ENCODE measurements at regions of chr3 and their contacts with region 1.

Region 1: DNA sequence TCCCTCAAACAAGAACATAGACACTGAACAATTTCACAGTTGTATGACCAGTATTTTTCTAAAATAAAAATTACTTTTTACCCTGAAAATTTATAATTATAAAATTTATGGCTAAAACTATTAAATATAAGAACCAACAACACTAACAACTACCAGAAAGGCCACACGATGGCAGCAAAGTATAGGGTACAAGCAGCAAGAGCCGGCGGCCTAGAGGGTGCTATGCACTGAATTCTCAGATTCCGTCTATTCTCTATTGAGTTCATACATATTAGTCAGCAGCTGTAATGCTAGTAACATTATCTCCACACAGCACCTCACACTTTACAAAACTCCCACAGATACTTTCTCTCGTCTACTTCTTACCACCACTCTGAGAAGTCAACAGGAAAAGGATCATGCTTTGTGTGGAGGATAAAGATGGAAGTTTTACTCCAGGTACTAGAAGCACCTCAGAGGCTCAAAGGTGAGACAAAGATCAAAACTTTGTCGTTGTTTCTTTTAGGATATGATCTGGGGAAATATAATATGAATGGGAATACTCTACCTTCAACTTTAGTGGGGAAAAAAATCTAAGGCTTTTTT is 160.5 kb downstream of the FGF12 start:
- DNase-seq: peak; percentile 10 to 75
- H3K4me3 ChIP-seq: no peak overlapping the region
- H3K27ac ChIP-seq: no peak overlapping the region
- H3K4me1 ChIP-seq: no peaks in the 10 kb centered on the region
- H3K27me3 ChIP-seq: no peaks in the 10 kb centered on the region
- CTCF ChIP-seq: peak; percentile 27 to 91 (median 56)
- EP300 ChIP-seq: no peak
- POLR2A ChIP-seq: no peak
- RAD21 ChIP-seq: peak; percentile 97

Region 2: GRCh38 chr3:192597533-192598302 is 30.9 kb after region 1 on chr3:
- CTCF ChIA-PET with region 1: no interaction called
- POLR2A ChIA-PET with region 1: no interaction called
- DNase-seq: no peak
- H3K4me3 ChIP-seq: no peak overlapping the region
- H3K27ac ChIP-seq: no peak overlapping the region
- H3K4me1 ChIP-seq: peaks cover 0 to 6% (median 2%) of the 10 kb centered on the region in 4 experiments; a peak in 2 of 7 replicates
- H3K27me3 ChIP-seq: no peaks in the 10 kb centered on the region
- CTCF ChIP-seq: no peak
- EP300 ChIP-seq: no peak
- POLR2A ChIP-seq: no peak
- RAD21 ChIP-seq: no peak

Region 3: DNA sequence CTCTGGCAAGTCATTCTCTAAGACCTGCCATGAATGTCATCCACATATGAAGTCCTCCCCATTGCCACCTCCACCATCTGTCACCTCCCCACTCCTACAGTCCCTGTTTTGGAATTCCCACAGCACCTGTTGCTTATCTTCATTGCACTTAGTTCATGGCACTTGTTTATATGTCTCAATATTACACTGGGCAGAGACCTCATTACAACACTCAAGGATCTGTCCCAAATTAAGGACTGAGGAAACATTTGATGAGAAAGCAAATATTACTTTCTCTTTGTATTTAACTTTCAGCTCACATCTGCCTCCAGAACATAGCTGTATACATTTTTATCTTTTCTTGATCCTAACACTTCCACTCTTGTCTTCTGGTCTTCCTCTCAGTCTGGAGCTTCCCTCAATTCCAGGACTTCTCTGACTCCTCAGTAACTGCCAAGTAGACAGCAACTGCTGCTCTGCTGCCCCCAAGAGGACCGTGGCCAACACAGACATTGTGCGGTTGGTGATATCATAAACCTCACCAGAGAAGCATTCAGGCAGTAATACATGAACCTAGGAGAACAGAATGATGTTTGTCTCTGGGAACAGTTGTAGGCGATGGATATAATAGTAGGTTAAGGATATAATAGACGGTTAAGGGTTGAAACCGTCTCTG is 205.6 kb after region 1 on chr3:
- CTCF ChIA-PET with region 1: interaction called, 47 read pairs
- POLR2A ChIA-PET with region 1: no interaction called
- DNase-seq: peak; percentile 36 to 60
- H3K4me3 ChIP-seq: no peak overlapping the region
- H3K27ac ChIP-seq: no peak overlapping the region
- H3K4me1 ChIP-seq: no peaks in the 10 kb centered on the region
- H3K27me3 ChIP-seq: no peaks in the 10 kb centered on the region
- CTCF ChIP-seq: peak; percentile 83 to 90 (median 83)
- EP300 ChIP-seq: no peak
- POLR2A ChIP-seq: no peak
- RAD21 ChIP-seq: peak; percentile 96

Region 4: DNA sequence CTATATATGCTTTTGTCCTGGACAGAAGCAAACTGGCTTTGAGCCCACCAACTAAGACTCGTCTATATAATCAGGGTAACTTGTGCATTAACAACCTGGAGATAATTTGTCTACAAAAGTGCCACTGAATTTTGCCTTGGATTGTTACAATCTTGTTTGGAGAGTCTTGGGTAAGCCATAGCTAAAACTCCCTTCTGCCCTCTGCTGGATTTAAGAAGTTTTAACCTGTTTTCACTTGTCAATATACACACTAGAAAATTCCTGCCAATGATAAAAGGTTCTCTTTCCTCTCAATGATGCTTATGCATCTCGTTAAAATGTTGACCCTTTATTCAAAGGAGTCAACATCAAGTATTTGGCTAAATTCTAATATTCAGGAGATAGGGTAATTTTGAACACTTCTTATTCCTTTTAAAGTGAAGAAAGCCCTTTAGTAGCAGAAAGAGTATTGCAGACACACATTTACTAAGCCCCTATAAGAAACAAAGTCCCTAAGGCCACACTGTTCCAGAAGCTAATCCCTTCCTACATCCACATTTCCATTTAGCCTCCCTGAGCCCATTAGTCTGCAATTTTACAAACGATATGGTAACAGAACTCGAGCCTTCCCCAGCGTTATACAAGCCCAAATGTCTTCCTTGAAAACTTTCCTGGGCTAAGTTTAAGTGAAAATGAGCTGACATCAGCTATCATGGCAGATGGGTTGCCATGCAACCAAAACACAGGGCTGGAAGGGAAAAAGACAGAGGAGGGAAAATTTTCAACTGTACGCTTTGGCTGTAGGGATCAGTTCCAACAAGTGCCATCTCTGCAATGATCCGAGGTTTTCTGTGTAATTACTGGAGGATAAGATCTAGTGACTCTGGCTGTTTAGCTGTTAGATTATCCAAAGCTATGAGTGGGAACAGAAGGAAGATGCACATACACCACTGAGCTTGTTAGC is 236.4 kb after region 1 on chr3:
- CTCF ChIA-PET with region 1: interaction called, 77 read pairs
- POLR2A ChIA-PET with region 1: no interaction called
- DNase-seq: no peak
- H3K4me3 ChIP-seq: no peak overlapping the region
- H3K27ac ChIP-seq: no peak overlapping the region
- H3K4me1 ChIP-seq: peaks cover 0 to 3% (median 0%) of the 10 kb centered on the region in 4 experiments; a peak in 1 of 7 replicates
- H3K27me3 ChIP-seq: no peaks in the 10 kb centered on the region
- CTCF ChIP-seq: peak in 2 of 3 experiments; percentile 42 to 51; a peak in 2 of 4 replicates
- EP300 ChIP-seq: no peak
- POLR2A ChIP-seq: no peak
- RAD21 ChIP-seq: peak; percentile 59 to 62

Measured in H1 (cell line).